ENCODE measurements at regions of chr6 and their contacts with region 1.

Region 1: GRCh38 chr6:98054453-98054852 is 771.4 kb upstream of the MMS22L start:
- DNase-seq: no peak
- ATAC-seq: 0 out of 2 replicates have a peak, but pooled peaks have one; percentile 32
- H3K4me3 ChIP-seq: no peak overlapping the region
- H3K27ac ChIP-seq: no peak overlapping the region
- H3K4me1 ChIP-seq: no peaks in the 10 kb centered on the region
- H3K27me3 ChIP-seq: peaks cover 5% of the 10 kb centered on the region; the same call in 1 of the 2 replicates
- CTCF ChIP-seq: peak in 2 of 3 experiments; percentile 11 to 43; a peak in 2 of 6 replicates
- POLR2A ChIP-seq: no peak
- RAD21 ChIP-seq: peak; percentile 35; the same call in 1 of the 2 replicates

Region 2: GRCh38 chr6:96975852-96976251 is 1078.6 kb before region 1 on chr6:
- CTCF ChIA-PET with region 1: no interaction called
- POLR2A ChIA-PET with region 1: no interaction called
- RAD21 ChIA-PET with region 1: no interaction called
- intact Hi-C with region 1: no loop called
- DNase-seq: no peak
- ATAC-seq: no peak
- H3K4me3 ChIP-seq: no peak overlapping the region
- H3K27ac ChIP-seq: no peak overlapping the region
- H3K4me1 ChIP-seq: no peaks in the 10 kb centered on the region
- H3K27me3 ChIP-seq: no peaks in the 10 kb centered on the region
- CTCF ChIP-seq: no peak
- POLR2A ChIP-seq: no peak
- RAD21 ChIP-seq: no peak

Region 3: GRCh38 chr6:98839781-98840361 is 785.4 kb after region 1 on chr6:
- CTCF ChIA-PET with region 1: no interaction called
- POLR2A ChIA-PET with region 1: no interaction called
- RAD21 ChIA-PET with region 1: no interaction called
- intact Hi-C with region 1: loop called (anchors 5 kb)
- DNase-seq: no peak
- ATAC-seq: peak; percentile 61
- H3K4me3 ChIP-seq: no peak overlapping the region
- H3K27ac ChIP-seq: no peak overlapping the region
- H3K4me1 ChIP-seq: no peaks in the 10 kb centered on the region
- H3K27me3 ChIP-seq: peaks cover 18% of the 10 kb centered on the region; the same call in 1 of the 2 replicates
- CTCF ChIP-seq: peak; percentile 6 to 44 (median 29); a peak in 3 of 6 replicates
- POLR2A ChIP-seq: no peak
- RAD21 ChIP-seq: peak; percentile 42; the same call in 1 of the 2 replicates

Measured in HCT116 (cell line).